ENCODE measurements at regions of chr7 and their contacts with region 1.

Region 1: GRCh38 chr7:127392566-127393367 is at the start of gene ZNF800:
- DNase-seq: peak; percentile 89
- ATAC-seq: peak; percentile 85
- H3K4me3 Mint-ChIP-seq: peak within 1 kb of the TSS; percentile 96
- H3K27ac Mint-ChIP-seq: peak within 1 kb of the TSS; percentile 98
- H3K4me1 Mint-ChIP-seq: peaks cover 60% of the 10 kb centered on the region
- H3K27me3 Mint-ChIP-seq: no peaks in the 10 kb centered on the region
- CTCF ChIP-seq: no peak
- total RNA-seq, gene ZNF800: 40.5 and 53.5 TPM in 2 replicates

Region 2: DNA sequence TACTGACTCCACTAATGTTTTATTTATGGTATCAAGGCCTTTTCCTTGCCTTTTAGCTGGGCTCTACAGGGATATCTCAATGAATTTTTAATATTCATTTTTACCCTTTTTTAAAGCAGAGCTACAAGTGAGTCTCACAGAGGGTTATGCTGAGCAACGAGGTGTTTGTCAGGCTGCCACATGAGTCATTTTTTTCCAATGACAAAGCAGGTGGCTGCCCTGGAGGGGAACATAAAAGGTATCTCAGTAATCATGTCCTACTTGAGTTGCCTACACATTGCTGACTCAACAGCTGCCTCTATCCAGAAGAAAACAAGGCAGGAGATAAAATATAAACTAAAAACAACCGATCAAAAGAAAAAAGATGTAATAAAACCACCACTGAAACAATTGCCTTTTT is 1458.2 kb before region 1 on chr7:
- CTCF ChIA-PET with region 1: no interaction called
- POLR2A ChIA-PET with region 1: no interaction called
- intact Hi-C with region 1: no loop called
- DNase-seq: no peak
- ATAC-seq: no peak
- H3K4me3 Mint-ChIP-seq: no peak overlapping the region
- H3K27ac Mint-ChIP-seq: no peak overlapping the region
- H3K4me1 Mint-ChIP-seq: no peaks in the 10 kb centered on the region
- H3K27me3 Mint-ChIP-seq: no peaks in the 10 kb centered on the region
- CTCF ChIP-seq: no peak

Region 3: DNA sequence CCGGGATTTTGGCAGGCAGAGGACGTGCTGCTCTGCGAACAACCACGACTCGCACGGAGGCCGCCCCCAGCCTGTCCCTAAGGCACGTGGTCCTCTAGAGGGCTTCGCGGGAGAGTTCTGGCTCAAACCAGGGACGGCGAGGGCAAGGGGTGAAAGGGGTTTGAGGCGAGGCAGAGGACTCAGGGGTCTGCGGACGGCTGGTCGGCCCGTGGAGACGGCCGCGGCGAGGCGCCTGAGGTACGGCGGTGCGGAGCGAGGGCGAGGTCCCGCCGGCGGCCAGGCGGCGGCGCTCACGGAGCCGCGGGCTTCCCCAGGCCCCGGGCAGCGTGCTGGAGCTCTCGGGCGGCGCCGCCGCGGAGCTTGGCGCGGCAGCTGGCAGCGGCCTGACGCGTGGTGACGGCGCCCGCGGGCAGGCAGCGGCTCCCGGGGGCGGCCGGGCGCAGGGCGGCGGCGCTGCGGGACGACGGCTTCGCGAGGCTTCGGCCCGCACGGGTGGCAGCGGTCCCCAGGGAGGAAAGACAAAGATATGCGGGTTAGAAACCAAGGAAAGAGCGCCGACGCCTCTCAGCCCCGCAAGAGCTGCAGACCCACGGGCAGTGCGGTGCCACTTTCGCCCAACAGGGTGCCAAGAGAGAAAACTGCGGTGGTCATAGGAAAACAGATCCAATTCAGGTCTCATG is 45.1 kb before region 1 on chr7:
- CTCF ChIA-PET with region 1: interaction called, 13 read pairs
- POLR2A ChIA-PET with region 1: interaction called, 8 read pairs
- intact Hi-C with region 1: loop called (anchors 1 kb)
- DNase-seq: peak; percentile 73
- ATAC-seq: peak; percentile 98
- H3K4me3 Mint-ChIP-seq: peak overlapping the region; percentile 68
- H3K27ac Mint-ChIP-seq: no peak overlapping the region
- H3K4me1 Mint-ChIP-seq: peaks cover 16% of the 10 kb centered on the region
- H3K27me3 Mint-ChIP-seq: no peaks in the 10 kb centered on the region
- CTCF ChIP-seq: no peak

Region 4: GRCh38 chr7:127359011-127359410 is 33.8 kb before region 1 on chr7:
- CTCF ChIA-PET with region 1: no interaction called
- POLR2A ChIA-PET with region 1: no interaction called
- intact Hi-C with region 1: no loop called
- DNase-seq: no peak
- ATAC-seq: no peak
- H3K4me3 Mint-ChIP-seq: no peak overlapping the region
- H3K27ac Mint-ChIP-seq: no peak overlapping the region
- H3K4me1 Mint-ChIP-seq: no peaks in the 10 kb centered on the region
- H3K27me3 Mint-ChIP-seq: no peaks in the 10 kb centered on the region
- CTCF ChIP-seq: no peak

Region 5: DNA sequence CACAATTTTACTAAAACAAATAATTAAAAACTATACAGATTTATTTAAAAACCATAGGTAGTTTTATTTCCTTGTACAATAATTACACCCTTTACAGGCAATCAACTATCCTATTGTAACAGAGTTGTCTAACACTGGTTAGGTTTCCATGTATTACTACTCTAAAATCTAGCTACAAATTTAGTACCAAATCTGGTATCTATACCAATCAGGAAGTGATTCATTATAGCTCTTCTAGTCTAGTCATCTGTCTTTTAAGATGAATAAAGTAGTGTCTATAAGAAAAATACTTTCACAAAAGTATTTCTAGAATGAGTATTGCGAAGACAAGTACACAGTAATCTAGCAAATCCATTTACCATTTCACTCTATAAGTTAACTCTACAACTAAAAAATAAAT is 17.1 kb before region 1 on chr7:
- CTCF ChIA-PET with region 1: no interaction called
- POLR2A ChIA-PET with region 1: interaction called, 7 read pairs
- intact Hi-C with region 1: loop called (anchors 2 kb)
- DNase-seq: no peak
- ATAC-seq: no peak
- H3K4me3 Mint-ChIP-seq: no peak overlapping the region
- H3K27ac Mint-ChIP-seq: no peak overlapping the region
- H3K4me1 Mint-ChIP-seq: peaks cover 31% of the 10 kb centered on the region
- H3K27me3 Mint-ChIP-seq: no peaks in the 10 kb centered on the region
- CTCF ChIP-seq: no peak

Region 6: GRCh38 chr7:127447326-127447945 is 54.7 kb after region 1 on chr7:
- CTCF ChIA-PET with region 1: interaction called, 22 read pairs
- POLR2A ChIA-PET with region 1: interaction called, 19 read pairs
- intact Hi-C with region 1: loop called (anchors 1 kb)
- DNase-seq: peak; percentile 31
- ATAC-seq: peak; percentile 100
- H3K4me3 Mint-ChIP-seq: no peak overlapping the region
- H3K27ac Mint-ChIP-seq: no peak overlapping the region
- H3K4me1 Mint-ChIP-seq: peaks cover 2% of the 10 kb centered on the region
- H3K27me3 Mint-ChIP-seq: peaks cover 34% of the 10 kb centered on the region
- CTCF ChIP-seq: no peak

Region 7: GRCh38 chr7:127651556-127652332 is 259.0 kb after region 1 on chr7 and contains the start of gene SND1:
- CTCF ChIA-PET with region 1: no interaction called
- POLR2A ChIA-PET with region 1: interaction called, 14 read pairs
- intact Hi-C with region 1: loop called (anchors 1 kb)
- DNase-seq: peak; percentile 93
- ATAC-seq: peak; percentile 92
- H3K4me3 Mint-ChIP-seq: no peak within 1 kb of the TSS
- H3K27ac Mint-ChIP-seq: peak within 1 kb of the TSS; percentile 97
- H3K4me1 Mint-ChIP-seq: peaks cover 49% of the 10 kb centered on the region
- H3K27me3 Mint-ChIP-seq: no peaks in the 10 kb centered on the region
- CTCF ChIP-seq: no peak
- total RNA-seq, gene SND1: 204 and 215 TPM in 2 replicates